HepG2 (cell line): ENCODE measurements at regions of chr20 and their contacts with region 1.

Region 1: DNA sequence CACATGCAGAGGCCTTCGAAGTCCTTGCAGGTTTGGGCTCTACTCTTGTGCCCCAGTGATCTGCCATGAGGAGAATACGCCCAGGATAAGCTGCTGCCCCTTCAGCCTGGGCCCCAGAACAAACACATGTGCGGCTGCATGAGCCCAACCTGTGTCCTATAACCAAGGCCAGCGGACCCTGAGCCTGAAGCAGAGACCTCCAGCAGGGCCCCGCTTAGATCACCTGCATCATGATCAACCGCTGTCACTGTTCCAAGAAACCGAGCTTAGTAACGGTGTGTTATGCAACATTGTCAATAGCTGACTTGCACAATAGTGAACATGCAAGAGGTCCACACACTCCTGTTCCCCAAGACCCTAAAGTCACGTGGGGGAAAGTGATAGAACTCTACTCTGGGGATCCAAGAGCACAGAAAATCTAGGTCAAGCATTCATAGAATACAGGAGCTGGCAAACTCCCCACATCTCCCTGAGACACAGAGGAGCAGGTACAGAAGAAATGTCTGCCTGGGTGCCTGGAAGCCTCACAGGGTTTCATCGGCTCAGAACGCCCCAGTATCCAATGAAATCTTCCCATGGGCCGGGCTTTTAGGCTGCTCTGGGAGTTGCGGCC is 136.2 kb downstream of the BMP7 start:
- DNase-seq: peak; percentile 84
- ATAC-seq: peak; percentile 86
- H3K4me3 ChIP-seq: no peak overlapping the region
- H3K27ac ChIP-seq: peak overlapping the region; percentile 41
- H3K4me1 ChIP-seq: peaks cover 19% of the 10 kb centered on the region
- H3K27me3 ChIP-seq: peaks cover 0 to 20% of the 10 kb centered on the region in 2 experiments; a peak in 1 of 5 replicates
- CTCF ChIP-seq: no peak
- EP300 ChIP-seq: peak; percentile 87 to 94
- POLR2A ChIP-seq: no peak
- RAD21 ChIP-seq: no peak

Region 2: GRCh38 chr20:57030611-57031600 is 99.4 kb before region 1 on chr20:
- CTCF ChIA-PET with region 1: no interaction called
- POLR2A ChIA-PET with region 1: no interaction called
- in situ Hi-C with region 1: no loop called
- intact Hi-C with region 1: no loop called
- DNase-seq: no peak
- ATAC-seq: no peak
- H3K4me3 ChIP-seq: no peak overlapping the region
- H3K27ac ChIP-seq: no peak overlapping the region
- H3K4me1 ChIP-seq: no peaks in the 10 kb centered on the region
- H3K27me3 ChIP-seq: peaks cover 1 to 4% of the 10 kb centered on the region in 2 experiments; a peak in 1 of 5 replicates
- CTCF ChIP-seq: no peak
- EP300 ChIP-seq: no peak
- POLR2A ChIP-seq: no peak
- RAD21 ChIP-seq: no peak

Region 3: DNA sequence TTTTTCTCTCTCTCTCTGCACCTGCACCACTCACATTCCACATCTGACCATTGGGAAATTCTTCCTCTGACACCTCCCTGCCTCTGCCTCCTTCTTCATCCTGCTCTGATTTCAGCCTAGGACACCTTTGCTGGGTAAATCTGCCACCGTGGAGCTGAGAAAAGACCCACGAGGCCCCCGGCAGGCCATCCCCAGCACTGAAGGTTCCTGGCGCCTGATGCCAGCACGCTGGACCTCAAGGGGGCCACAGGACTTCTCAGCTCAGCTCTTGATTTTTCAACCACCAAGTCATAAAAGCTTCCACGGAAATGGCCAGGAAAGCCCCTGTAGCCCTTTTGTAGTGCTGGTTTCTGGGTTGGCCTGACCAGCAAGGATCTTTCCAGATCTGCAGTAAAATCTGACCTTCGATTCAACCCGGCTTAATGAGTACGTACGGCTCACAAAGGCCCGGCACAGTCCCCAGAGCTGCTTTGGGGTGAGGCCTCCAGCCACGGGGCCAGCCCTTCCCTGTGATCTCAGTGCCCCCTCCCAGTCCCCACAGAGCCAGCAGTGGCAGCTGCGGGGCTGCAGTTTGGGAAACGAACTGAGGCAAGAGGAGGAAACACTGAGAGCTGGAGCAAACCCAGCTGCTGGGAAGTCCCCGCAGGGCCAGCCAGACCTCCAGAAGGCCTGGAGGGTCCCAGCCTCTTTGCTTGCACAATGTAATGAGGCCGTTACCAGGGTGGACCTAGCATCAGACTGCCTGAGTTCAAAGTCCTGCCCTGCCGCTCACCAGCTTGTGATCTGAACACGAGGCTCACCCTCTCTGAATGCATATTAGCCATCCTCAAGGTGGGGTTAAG is 21.3 kb before region 1 on chr20:
- CTCF ChIA-PET with region 1: no interaction called
- POLR2A ChIA-PET with region 1: no interaction called
- in situ Hi-C with region 1: no loop called
- intact Hi-C with region 1: loop called (anchors 1 kb)
- DNase-seq: peak; percentile 60
- ATAC-seq: peak; percentile 86
- H3K4me3 ChIP-seq: peak overlapping the region in 1 of 3 experiments; percentile 38; a peak in 1 of 6 replicates
- H3K27ac ChIP-seq: no peak overlapping the region
- H3K4me1 ChIP-seq: peaks cover 15% of the 10 kb centered on the region
- H3K27me3 ChIP-seq: peaks cover 2 to 13% of the 10 kb centered on the region in 2 experiments; a peak in 3 of 5 replicates
- CTCF ChIP-seq: no peak
- EP300 ChIP-seq: no peak
- POLR2A ChIP-seq: no peak
- RAD21 ChIP-seq: no peak

Region 4: DNA sequence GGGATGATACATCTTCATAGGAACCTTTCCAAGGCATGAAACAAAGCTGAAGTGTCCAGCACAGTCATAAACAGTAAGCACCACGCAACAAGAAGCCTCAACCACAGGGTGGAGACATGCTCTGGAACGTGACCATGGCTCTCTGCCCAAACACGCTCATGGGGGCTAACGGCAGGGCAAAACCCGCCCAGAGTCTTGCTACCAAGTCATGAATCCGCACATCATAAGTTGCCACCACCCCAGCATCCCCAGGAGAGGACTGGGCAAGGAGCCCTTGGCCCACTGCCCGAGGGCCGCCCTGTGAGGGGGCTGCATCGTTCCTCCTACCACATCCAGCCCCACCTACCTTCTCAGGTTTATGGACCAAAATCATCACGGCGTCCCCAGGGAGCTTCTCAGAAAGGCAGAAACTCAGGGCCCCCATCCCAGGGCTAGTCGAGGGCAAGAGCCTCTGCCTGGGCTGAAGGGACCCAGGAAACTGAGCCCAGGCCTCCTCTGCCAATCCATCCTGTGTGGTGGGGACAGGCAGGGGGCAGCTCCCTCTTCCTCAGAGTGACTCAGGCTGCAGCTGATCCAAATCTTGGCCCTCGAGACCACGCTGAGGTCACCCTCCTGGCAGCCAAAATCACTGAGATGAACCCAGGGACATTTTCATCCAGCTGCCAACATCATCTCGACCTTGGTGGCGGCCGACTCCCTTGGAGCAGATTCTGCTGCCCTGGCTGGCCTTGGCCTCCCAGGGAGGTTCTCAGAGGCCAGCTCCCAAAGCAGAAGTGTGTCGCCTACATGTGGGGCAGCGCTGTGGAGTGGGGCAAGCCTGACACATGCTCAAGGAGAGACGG is 93.6 kb after region 1 on chr20:
- CTCF ChIA-PET with region 1: no interaction called
- POLR2A ChIA-PET with region 1: no interaction called
- in situ Hi-C with region 1: no loop called
- intact Hi-C with region 1: no loop called
- DNase-seq: no peak
- ATAC-seq: no peak
- H3K4me3 ChIP-seq: no peak overlapping the region
- H3K27ac ChIP-seq: no peak overlapping the region
- H3K4me1 ChIP-seq: no peaks in the 10 kb centered on the region
- H3K27me3 ChIP-seq: peaks cover 11 to 71% of the 10 kb centered on the region in 2 experiments; a peak in 3 of 5 replicates
- CTCF ChIP-seq: no peak
- EP300 ChIP-seq: no peak
- POLR2A ChIP-seq: no peak
- RAD21 ChIP-seq: no peak